Activated T-helper 1 cell treated with anti-CD3 and anti-CD28 coated beads, Interleukin-12 subunit alpha, Interleukin-12 subunit beta, Interleukin-2, Interleukin-4 antibody, amounts not matched to agents 30 ng/mL and 10 ng/mL and 1 ng/mL, durations not matched to agents 14 hours and 24 hours and 36 hours (primary cell): ENCODE measurements at regions of chr10 and their contacts with region 1.

Region 1: DNA sequence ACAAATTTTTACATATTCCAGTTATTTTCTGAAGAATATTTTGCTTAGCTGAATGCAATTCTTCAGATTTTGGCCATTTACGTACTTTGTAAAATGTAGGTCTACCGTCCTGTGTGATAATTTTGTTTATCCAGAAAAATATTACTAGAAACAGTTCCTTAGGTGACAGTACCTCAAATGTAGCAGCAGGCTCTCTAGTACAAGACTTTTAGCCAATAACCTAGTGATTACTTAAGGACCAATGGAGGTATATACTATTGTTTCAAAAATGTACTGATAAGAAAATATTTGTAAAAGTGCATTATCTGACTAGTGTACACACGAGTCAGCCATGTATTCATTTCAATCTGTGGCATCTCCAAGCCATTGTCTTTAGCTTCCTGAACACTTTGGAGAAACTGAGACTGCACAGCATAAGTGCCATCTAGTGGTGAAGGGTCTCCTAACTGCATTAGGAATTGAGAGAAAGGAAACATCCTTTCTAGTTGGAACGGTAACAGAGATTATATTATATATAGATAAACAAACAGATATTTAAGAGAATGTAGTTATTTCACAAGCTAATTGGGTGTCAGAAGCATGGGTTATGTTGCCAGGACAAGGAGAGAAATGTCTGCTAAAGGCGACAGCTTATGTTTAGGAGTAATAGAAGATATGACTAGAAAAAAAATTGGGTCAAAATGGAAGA is 23.7 kb downstream of the RTKN2 start:
- DNase-seq: peak; percentile 47
- H3K4me3 Mint-ChIP-seq: peak overlapping the region; percentile 60
- H3K27ac Mint-ChIP-seq: peak overlapping the region; percentile 45
- H3K4me1 Mint-ChIP-seq: peaks cover 45% of the 10 kb centered on the region
- H3K27me3 Mint-ChIP-seq: no peaks in the 10 kb centered on the region

Region 2: GRCh38 chr10:61733358-61733940 is 511.5 kb before region 1 on chr10:
- intact Hi-C with region 1: no loop called
- DNase-seq: no peak
- H3K4me3 Mint-ChIP-seq: no peak overlapping the region
- H3K27ac Mint-ChIP-seq: no peak overlapping the region
- H3K4me1 Mint-ChIP-seq: no peaks in the 10 kb centered on the region
- H3K27me3 Mint-ChIP-seq: peaks cover 39% of the 10 kb centered on the region

Region 3: GRCh38 chr10:61750929-61751471 is 493.9 kb before region 1 on chr10:
- intact Hi-C with region 1: loop called (anchors 1 kb)
- DNase-seq: peak; percentile 53
- H3K4me3 Mint-ChIP-seq: no peak overlapping the region
- H3K27ac Mint-ChIP-seq: peak overlapping the region; percentile 35
- H3K4me1 Mint-ChIP-seq: peaks cover 23% of the 10 kb centered on the region
- H3K27me3 Mint-ChIP-seq: no peaks in the 10 kb centered on the region

Region 4: GRCh38 chr10:61943674-61944410 is 301.1 kb before region 1 on chr10:
- intact Hi-C with region 1: loop called (anchors 1 kb)
- DNase-seq: no peak
- H3K4me3 Mint-ChIP-seq: peak overlapping the region; percentile 77
- H3K27ac Mint-ChIP-seq: peak overlapping the region; percentile 95
- H3K4me1 Mint-ChIP-seq: peaks cover 58% of the 10 kb centered on the region
- H3K27me3 Mint-ChIP-seq: no peaks in the 10 kb centered on the region

Region 5: DNA sequence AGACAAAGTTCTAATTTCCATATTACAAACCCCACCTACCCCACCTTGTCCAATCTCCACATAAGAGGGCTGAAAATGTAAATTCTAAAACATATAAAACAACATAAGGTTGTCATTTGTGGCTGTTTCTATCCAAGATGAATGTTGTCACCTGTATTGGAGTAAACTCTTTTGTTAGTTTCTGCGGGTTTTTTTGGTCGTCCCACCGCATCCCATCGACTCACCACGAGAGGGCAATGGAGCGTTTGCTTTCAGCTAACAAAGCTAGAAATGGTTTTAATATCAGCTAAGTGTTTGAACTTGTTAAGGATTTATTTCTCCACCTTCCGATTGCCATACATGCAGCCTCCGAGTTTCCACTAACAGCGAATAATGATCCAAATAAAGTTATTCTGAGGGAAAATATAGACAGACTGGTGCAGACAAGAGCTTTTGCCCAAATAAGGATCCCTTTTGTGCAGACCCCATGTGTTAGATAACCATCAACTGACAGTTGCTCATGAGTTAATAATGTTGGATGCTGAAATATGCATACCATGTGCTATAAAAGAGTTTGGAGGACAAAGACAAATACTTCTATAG is 206.2 kb before region 1 on chr10:
- intact Hi-C with region 1: loop called (anchors 1 kb)
- DNase-seq: peak; percentile 72
- H3K4me3 Mint-ChIP-seq: peak overlapping the region; percentile 73
- H3K27ac Mint-ChIP-seq: peak overlapping the region; percentile 89
- H3K4me1 Mint-ChIP-seq: peaks cover 95% of the 10 kb centered on the region
- H3K27me3 Mint-ChIP-seq: no peaks in the 10 kb centered on the region

Region 6: DNA sequence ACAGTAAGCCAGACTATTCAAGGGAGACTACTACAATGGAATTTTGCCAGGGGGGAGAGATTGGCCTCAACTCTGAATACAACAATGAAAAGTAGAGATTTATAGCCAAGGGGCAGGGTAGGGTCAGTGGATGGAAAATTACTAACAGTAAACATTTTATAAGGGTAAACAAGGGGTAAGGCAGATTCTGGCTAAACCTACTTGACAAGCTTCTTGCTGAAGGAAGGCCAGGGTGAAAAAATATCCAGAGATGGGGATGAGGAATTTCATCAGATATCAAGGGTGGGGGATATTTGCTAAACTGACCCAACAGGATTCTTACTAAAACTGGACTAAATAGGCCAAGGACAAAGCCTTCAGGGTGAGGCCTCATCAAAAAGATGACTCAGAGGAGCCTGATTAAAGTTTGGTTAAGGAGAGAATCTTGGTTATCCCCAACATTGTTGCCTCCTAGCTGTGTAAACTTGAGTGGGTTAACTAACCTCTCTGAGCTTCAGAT is 132.6 kb before region 1 on chr10:
- intact Hi-C with region 1: no loop called
- DNase-seq: no peak
- H3K4me3 Mint-ChIP-seq: no peak overlapping the region
- H3K27ac Mint-ChIP-seq: no peak overlapping the region
- H3K4me1 Mint-ChIP-seq: peaks cover 27% of the 10 kb centered on the region
- H3K27me3 Mint-ChIP-seq: no peaks in the 10 kb centered on the region

Region 7: DNA sequence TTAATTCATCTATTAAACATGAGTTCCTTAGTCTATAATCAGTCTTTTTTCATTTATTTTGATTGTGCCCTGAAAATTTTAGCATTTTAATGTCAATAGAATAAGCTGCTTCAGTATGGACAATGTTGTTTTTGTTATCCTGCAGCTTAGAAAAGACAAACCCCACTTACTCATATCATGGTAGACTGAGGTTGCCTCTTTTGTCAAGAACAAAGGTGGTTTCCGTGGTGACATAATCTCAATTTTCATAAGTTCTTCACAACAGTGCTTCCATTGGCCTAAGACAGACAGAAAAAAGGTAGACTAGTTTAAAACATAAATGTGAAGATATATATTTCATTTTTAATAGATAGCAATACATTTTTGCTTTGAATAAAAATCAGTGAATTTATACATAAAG is 45.3 kb before region 1 on chr10:
- intact Hi-C with region 1: loop called (anchors 1 kb)
- DNase-seq: no peak
- H3K4me3 Mint-ChIP-seq: no peak overlapping the region
- H3K27ac Mint-ChIP-seq: peak overlapping the region; percentile 32
- H3K4me1 Mint-ChIP-seq: peaks cover 39% of the 10 kb centered on the region
- H3K27me3 Mint-ChIP-seq: no peaks in the 10 kb centered on the region